A549 (cell line): ENCODE measurements at regions of chr1 and their contacts with region 1.

Region 1: DNA sequence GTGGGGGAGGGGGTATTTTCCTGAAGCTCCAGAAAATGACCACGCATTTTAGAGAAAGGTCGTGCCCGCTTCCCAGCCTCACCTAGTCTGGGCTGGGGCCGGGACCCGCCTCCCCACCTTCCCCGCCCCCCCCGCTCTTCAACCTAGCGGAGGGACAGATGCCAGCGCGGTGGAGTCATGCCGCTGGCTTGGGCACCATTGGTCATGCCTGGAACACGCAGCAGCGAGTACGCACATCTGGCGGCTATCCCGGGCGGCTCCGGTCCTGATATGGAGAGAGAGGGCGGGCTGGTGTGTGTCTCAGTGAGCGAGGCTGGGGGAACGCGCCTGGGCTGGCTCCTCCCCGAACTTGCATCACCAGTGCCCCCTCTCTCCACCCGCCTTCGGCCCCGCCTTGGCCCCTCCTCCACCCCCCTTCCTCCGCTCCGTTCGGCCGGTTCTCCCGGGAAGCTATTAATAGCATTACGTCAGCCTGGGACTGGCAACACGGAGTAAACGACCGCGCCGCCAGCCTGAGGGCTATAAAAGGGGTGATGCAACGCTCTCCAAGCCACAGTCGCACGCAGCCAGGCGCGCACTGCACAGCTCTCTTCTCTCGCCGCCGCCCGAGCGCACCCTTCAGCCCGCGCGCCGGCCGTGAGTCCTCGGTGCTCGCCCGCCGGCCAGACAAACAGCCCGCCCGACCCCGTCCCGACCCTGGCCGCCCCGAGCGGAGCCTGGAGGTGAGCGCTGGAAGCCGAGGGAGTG is at the start of gene ATF3:
- DNase-seq: peak; percentile 94 to 98
- ATAC-seq: peak; percentile 82 to 84
- H3K4me3 ChIP-seq: peak within 1 kb of the TSS; percentile 90
- H3K27ac ChIP-seq: peak within 1 kb of the TSS; percentile 88 to 93
- H3K4me1 ChIP-seq: peaks cover 23% of the 10 kb centered on the region; the same call in 2 of the 3 replicates
- CTCF ChIP-seq: no peak
- EP300 ChIP-seq: peak in 1 of 2 experiments; percentile 65; a peak in 2 of 5 replicates
- POLR2A ChIP-seq: peak; percentile 99
- RAD21 ChIP-seq: no peak; a peak in 2 of 5 replicates
- polyA plus RNA-seq, gene ATF3: 33.4 and 62.9 TPM in 2 replicates

Region 2: GRCh38 chr1:211920141-211920572 is 688.2 kb before region 1 on chr1:
- CTCF ChIA-PET with region 1: no interaction called
- POLR2A ChIA-PET with region 1: no interaction called
- DNase-seq: peak; percentile 55 to 96
- ATAC-seq: peak; percentile 70 to 86
- H3K4me3 ChIP-seq: no peak overlapping the region
- H3K27ac ChIP-seq: peak overlapping the region; percentile 95
- H3K4me1 ChIP-seq: peaks cover 63% of the 10 kb centered on the region
- CTCF ChIP-seq: no peak
- EP300 ChIP-seq: peak; percentile 60 to 88; a peak in 3 of 5 replicates
- POLR2A ChIP-seq: no peak
- RAD21 ChIP-seq: peak in 1 of 2 experiments; percentile 13; a peak in 2 of 5 replicates

Region 3: DNA sequence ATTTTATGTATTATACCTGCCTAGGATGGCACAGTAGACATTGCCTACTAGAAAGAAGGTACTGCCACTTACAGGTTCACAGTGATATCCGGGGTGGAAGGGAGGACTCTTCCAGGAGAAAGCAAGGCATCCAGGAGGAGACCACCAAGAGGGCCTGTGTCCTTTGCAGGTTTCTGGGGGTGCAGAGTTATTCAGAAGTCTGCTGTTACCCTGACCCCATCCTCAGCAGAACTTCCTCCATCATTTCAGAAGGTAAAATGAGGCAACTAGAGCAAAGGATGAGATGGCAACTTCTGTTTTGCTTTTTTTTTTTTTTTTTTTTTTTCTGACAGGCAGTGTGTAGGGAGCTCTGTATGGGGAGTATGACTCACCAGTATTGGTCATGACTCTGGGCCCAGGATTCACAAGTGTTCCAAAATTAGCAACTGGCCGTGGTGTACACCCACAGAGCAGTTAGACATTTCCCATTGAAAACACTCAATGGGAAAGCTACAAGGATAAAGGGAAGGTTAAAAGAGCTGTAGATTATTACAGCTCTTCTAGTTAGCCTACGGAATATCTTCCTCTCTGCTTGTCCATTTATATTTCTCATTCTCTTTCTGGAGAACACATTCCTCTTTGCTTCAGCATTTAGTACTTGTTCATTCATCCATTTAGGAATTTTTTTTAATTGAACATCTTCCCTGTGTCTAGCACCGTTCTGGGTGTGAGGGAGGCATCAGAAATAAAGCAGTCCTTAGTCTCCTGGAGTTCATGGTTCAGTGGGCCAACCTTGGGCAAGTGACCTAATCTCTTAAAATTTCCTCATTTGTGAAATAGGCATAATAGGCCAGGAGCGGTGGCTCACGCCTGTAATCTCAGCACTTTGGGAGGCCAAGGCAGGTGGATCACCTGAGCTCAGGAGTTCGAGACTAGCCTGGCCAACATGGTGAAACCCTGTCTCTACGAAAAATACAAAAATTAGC is 373.7 kb before region 1 on chr1:
- CTCF ChIA-PET with region 1: no interaction called
- POLR2A ChIA-PET with region 1: no interaction called
- DNase-seq: peak; percentile 77 to 81
- ATAC-seq: peak; percentile 91 to 95
- H3K4me3 ChIP-seq: no peak overlapping the region
- H3K27ac ChIP-seq: peak overlapping the region; percentile 31 to 55; a peak in 4 of 6 replicates
- H3K4me1 ChIP-seq: peaks cover 28% of the 10 kb centered on the region
- CTCF ChIP-seq: no peak
- EP300 ChIP-seq: no peak
- POLR2A ChIP-seq: no peak
- RAD21 ChIP-seq: no peak

Region 4: DNA sequence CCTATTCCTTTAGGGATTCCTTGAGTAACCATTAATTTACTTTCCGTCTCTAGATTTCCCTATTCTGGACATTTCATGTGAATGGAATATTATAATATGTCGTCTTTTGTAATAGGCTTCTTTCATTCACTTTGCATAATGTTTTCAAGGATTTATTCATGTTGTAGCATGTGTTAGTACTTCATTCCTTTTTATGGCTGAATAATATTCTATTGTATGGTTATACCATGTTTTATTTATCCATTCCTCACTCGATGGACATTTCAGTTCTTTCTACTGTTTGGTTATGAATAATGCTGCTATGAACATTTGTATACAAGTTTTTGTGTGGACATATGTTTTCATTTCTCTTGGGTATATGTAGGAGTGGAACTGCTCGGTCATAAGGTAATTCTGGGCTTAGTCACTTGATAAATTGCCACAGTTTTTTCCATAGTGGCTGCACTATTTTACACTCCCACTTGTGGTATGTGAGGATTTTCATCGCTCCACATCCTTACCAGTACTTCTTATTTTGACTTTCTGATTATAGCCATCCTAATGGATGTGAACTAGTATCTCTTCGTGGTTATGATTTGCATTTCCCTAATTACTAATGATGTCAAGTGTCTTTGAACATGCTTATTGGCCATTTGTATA is 305.5 kb before region 1 on chr1:
- CTCF ChIA-PET with region 1: no interaction called
- POLR2A ChIA-PET with region 1: no interaction called
- DNase-seq: no peak
- ATAC-seq: no peak
- H3K4me3 ChIP-seq: no peak overlapping the region
- H3K27ac ChIP-seq: no peak overlapping the region
- H3K4me1 ChIP-seq: no peaks in the 10 kb centered on the region
- CTCF ChIP-seq: no peak
- EP300 ChIP-seq: no peak
- POLR2A ChIP-seq: no peak
- RAD21 ChIP-seq: no peak

Region 5: GRCh38 chr1:212430416-212430815 is 178.0 kb before region 1 on chr1:
- CTCF ChIA-PET with region 1: no interaction called
- POLR2A ChIA-PET with region 1: no interaction called
- DNase-seq: no peak
- ATAC-seq: no peak
- H3K4me3 ChIP-seq: no peak overlapping the region
- H3K27ac ChIP-seq: no peak overlapping the region
- H3K4me1 ChIP-seq: peaks cover 17% of the 10 kb centered on the region
- CTCF ChIP-seq: no peak
- EP300 ChIP-seq: no peak
- POLR2A ChIP-seq: no peak
- RAD21 ChIP-seq: no peak

Region 6: DNA sequence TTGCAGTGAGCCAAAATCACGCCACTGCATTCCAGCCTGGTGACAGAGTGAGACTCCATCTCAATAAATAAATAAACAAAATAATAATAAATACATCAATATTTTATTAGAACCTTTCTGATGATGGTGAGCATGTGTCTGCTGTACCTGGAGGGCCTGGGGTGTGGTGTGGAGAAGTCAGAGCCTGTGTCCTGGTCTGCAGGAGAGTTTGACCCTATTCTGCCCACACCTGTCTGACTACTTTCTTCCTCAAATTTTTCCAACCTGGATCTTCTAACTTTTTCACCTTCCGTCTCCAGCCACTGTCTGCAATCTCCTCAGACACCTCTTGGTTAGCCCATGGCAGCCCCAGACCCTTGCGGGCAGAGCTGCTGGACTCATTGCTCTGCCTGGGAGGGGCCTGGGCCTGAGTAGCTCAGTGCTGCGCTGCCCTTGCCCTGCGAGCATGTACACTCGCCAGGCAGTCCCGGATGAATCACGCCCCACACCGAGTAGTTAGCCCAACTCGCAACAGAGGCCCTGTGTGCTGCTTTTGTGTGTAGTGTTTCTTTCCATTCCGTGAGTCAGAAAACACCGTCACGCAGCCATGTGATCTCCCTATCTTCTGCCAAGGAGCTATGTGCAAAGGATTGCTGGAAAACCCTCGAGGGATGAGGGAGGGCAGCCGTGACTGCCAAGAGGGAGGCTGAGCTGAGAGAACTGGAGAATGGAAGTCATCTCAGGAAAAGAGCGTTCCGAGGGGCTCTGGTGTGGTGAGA is 138.5 kb before region 1 on chr1:
- CTCF ChIA-PET with region 1: interaction called, 7 read pairs
- POLR2A ChIA-PET with region 1: interaction called, 25 read pairs
- DNase-seq: peak; percentile 56 to 78
- ATAC-seq: peak; percentile 91 to 96
- H3K4me3 ChIP-seq: no peak overlapping the region
- H3K27ac ChIP-seq: peak overlapping the region; percentile 65 to 76
- H3K4me1 ChIP-seq: peaks cover 14% of the 10 kb centered on the region; the same call in 2 of the 3 replicates
- CTCF ChIP-seq: no peak
- EP300 ChIP-seq: no peak; a peak in 1 of 5 replicates
- POLR2A ChIP-seq: no peak
- RAD21 ChIP-seq: no peak

Region 7: GRCh38 chr1:212488397-212489283 is 119.7 kb before region 1 on chr1:
- CTCF ChIA-PET with region 1: interaction called, 6 read pairs
- POLR2A ChIA-PET with region 1: interaction called, 52 read pairs
- DNase-seq: peak; percentile 54 to 98
- ATAC-seq: peak; percentile 39 to 62
- H3K4me3 ChIP-seq: no peak overlapping the region
- H3K27ac ChIP-seq: peak overlapping the region; percentile 75 to 86
- H3K4me1 ChIP-seq: peaks cover 67% of the 10 kb centered on the region
- CTCF ChIP-seq: no peak
- EP300 ChIP-seq: peak; percentile 94; a peak in 4 of 5 replicates
- POLR2A ChIP-seq: no peak
- RAD21 ChIP-seq: peak in 1 of 2 experiments; percentile 1; a peak in 1 of 5 replicates

Region 8: DNA sequence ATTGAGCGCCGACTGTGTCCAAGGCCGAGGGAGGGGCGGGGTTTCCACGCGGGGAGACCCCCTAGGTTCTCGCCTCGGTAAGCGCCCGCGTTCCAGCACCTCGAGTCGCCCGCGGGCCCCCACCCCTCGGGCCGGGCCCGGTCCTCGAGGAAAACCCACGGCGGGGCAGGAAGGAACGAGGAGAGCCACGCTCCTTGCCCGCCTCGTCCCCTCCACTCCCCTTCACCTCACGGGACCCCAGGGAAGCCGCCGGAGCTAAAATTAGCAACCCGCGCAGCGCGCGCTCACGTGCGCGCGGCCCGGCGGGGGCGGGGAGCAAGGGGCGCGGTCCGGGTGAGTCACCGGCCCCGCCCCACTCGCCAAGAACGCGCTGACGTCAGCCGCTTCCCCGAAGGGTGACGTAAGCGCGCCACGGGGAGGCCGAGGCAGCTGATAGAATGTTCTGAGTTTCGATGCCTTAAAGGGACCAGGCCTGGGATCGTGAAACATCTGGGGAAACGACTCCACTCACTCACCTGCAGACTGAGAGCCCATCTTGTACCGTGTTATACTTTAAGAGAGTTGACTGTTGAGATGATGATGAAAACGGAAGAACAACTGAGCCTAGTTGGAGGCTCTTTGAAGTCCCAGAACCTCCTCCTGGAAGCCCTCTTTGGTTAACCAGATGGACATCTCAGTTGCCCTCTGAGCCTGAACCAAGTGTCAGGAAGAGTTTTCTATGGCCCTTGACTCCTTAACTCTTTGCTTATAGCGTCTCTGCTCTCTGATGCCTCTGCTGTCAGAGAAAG is 49.5 kb before region 1 on chr1:
- CTCF ChIA-PET with region 1: interaction called, 4 read pairs
- POLR2A ChIA-PET with region 1: interaction called, 39 read pairs
- DNase-seq: peak; percentile 82 to 95
- ATAC-seq: peak; percentile 91 to 92
- H3K4me3 ChIP-seq: peak overlapping the region; percentile 69
- H3K27ac ChIP-seq: peak overlapping the region; percentile 89 to 95
- H3K4me1 ChIP-seq: peaks cover 16% of the 10 kb centered on the region
- CTCF ChIP-seq: no peak
- EP300 ChIP-seq: no peak; a peak in 1 of 5 replicates
- POLR2A ChIP-seq: no peak; the same call in 1 of the 2 replicates
- RAD21 ChIP-seq: peak in 1 of 2 experiments; percentile 20; a peak in 1 of 5 replicates

Region 9: GRCh38 chr1:212586206-212587015 is 22.0 kb before region 1 on chr1:
- CTCF ChIA-PET with region 1: interaction called, 4 read pairs
- POLR2A ChIA-PET with region 1: interaction called, 14 read pairs
- DNase-seq: no peak
- ATAC-seq: no peak
- H3K4me3 ChIP-seq: no peak overlapping the region
- H3K27ac ChIP-seq: no peak overlapping the region
- H3K4me1 ChIP-seq: no peaks in the 10 kb centered on the region
- CTCF ChIP-seq: no peak
- EP300 ChIP-seq: no peak
- POLR2A ChIP-seq: no peak
- RAD21 ChIP-seq: no peak

Region 10: GRCh38 chr1:212618501-212619405 is 10.4 kb after region 1 on chr1:
- CTCF ChIA-PET with region 1: interaction called, 6 read pairs
- POLR2A ChIA-PET with region 1: interaction called, 42 read pairs
- DNase-seq: no peak
- ATAC-seq: no peak
- H3K4me3 ChIP-seq: no peak overlapping the region
- H3K27ac ChIP-seq: no peak overlapping the region
- H3K4me1 ChIP-seq: no peaks in the 10 kb centered on the region
- CTCF ChIP-seq: no peak
- EP300 ChIP-seq: no peak
- POLR2A ChIP-seq: no peak
- RAD21 ChIP-seq: no peak